Activated T-helper 2 cell treated with anti-CD3 and anti-CD28 coated beads, Interferon-gamma antibody, Interleukin-2, Interleukin-4, amounts not matched to agents 10 μg/mL and 5 μg/mL and 100 μg/mL, durations not matched to agents 14 hours and 24 hours and 36 hours (primary cell): ENCODE measurements at regions of chr14 and their contacts with region 1.

Region 1: DNA sequence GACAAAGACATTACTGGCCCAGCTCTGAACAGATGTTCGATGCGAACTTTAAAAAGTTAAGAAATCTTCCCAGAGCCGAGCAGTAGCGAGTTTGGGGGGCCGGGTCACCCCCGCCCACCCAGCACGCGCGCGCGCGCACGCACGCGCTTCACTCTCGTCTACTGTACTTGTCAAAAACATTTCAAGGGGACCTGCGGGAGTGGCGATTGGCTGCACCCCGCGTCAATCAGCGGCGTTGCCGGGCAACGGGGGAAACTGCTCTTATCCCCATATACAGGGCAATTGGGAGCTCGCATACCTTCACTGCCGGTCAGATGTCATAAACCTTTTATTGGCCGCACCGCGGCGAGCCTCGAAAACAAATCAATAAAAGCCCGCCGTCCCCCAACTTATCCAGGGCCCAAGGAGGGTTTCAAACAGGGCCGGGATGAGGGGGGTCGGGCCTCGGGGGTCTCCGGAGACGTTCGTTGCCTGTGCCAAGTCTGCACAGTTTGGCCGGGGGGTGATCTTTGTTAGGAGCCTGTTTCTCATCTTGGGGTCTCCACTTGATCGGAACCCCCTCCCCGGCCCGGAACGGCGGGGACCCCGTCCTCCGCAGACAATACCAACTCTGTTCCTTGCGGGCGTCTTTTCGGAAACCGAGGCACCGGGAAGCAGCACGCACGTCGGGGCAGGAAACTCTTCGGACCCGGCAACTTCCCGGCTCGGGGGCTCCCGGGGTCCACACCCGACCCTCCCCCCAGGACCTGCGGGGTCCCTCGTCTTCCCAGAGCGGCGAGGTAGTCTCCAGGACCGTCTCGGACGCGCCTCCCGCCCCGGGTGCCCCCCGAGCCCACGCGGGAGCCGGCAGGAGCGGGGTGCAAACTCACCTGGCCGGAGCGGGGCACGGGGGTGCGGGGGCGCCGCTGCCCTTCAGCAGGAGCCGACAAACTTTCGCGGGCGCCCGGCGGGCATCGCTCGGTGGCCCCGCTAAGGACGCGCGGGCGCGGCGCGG is 734 bp downstream of the FOXN3 start:
- DNase-seq: peak; percentile 99
- H3K4me3 Mint-ChIP-seq: peak overlapping the region; percentile 93
- H3K27ac Mint-ChIP-seq: peak overlapping the region; percentile 88
- H3K4me1 Mint-ChIP-seq: peaks cover 48% of the 10 kb centered on the region
- H3K27me3 Mint-ChIP-seq: no peaks in the 10 kb centered on the region

Region 2: GRCh38 chr14:89067293-89067972 is 348.9 kb before region 1 on chr14:
- intact Hi-C with region 1: loop called (anchors 10 kb)
- DNase-seq: peak; percentile 10
- H3K4me3 Mint-ChIP-seq: no peak overlapping the region
- H3K27ac Mint-ChIP-seq: peak overlapping the region; percentile 4
- H3K4me1 Mint-ChIP-seq: peaks cover 13% of the 10 kb centered on the region
- H3K27me3 Mint-ChIP-seq: peaks cover 52% of the 10 kb centered on the region

Region 3: DNA sequence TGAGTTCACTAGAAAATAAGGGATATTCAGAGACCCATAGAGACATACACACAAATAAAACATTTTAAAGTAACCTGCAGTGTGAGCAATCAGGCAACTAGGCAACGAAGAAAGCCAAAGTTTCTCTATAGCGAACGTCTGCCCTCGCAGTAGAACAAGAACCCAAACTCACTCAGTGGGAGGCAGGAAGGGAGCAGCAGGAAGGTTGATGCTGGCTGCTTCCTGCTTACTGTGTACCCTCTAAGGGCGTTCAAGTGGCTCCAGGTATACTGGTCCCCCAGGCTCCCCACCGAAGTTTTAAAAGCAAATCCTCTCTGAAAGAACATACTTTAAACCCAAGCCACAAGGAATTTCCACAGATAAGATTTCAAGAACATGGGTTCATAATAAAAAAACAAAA is 248.6 kb before region 1 on chr14:
- intact Hi-C with region 1: no loop called
- DNase-seq: no peak
- H3K4me3 Mint-ChIP-seq: no peak overlapping the region
- H3K27ac Mint-ChIP-seq: no peak overlapping the region
- H3K4me1 Mint-ChIP-seq: peaks cover 9% of the 10 kb centered on the region
- H3K27me3 Mint-ChIP-seq: no peaks in the 10 kb centered on the region

Region 4: GRCh38 chr14:89276424-89276975 is 139.8 kb before region 1 on chr14:
- intact Hi-C with region 1: loop called (anchors 2 kb)
- DNase-seq: peak; percentile 66
- H3K4me3 Mint-ChIP-seq: peak overlapping the region; percentile 77
- H3K27ac Mint-ChIP-seq: peak overlapping the region; percentile 99
- H3K4me1 Mint-ChIP-seq: peaks cover 83% of the 10 kb centered on the region
- H3K27me3 Mint-ChIP-seq: no peaks in the 10 kb centered on the region

Region 5: DNA sequence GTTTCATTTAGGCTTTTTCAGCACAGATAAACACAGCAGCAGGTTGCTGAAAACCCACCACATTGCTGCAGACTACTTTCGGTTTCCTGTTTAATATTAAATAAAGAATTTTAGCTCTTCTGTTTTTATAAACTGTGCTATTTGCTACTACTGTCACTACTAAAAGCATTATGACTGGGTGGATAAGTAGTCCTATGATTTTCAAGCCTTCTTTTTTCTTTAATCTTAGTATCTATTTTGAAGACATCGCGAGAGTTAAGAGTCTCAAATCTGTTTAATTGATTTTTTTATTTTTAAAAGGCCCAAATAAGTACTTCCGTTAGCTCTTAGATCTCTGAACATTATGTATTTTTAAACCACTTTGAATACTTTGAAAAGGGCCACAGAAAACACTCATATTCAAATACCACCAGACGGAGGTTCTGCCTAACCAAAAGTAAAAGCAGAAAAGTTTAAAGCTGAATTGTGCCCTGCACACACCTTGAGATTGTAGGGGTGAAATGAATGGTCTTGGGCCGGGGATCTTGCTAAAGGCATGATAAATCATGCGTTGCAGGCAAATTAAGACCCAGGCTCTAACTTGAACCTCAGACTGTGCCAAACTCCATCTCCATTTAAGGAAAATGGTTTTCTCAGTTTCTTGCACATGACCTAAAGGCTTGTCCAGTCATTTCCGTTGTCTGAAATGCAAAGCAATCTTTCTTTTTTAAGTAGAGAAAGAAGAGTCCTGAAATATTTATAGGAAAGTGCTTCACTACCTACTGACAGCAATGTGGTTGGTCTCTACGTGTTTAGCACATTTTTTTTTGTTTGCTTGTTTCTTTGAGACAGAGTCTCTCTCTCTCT is 14.3 kb after region 1 on chr14:
- intact Hi-C with region 1: loop called (anchors 1 kb)
- DNase-seq: peak; percentile 52
- H3K4me3 Mint-ChIP-seq: peak overlapping the region; percentile 84
- H3K27ac Mint-ChIP-seq: peak overlapping the region; percentile 94
- H3K4me1 Mint-ChIP-seq: peaks cover 59% of the 10 kb centered on the region
- H3K27me3 Mint-ChIP-seq: no peaks in the 10 kb centered on the region

Region 6: GRCh38 chr14:89773644-89774316 is 357.5 kb after region 1 on chr14:
- intact Hi-C with region 1: loop called (anchors 5 kb)
- DNase-seq: peak; percentile 39
- H3K4me3 Mint-ChIP-seq: peak overlapping the region; percentile 7
- H3K27ac Mint-ChIP-seq: no peak overlapping the region
- H3K4me1 Mint-ChIP-seq: peaks cover 23% of the 10 kb centered on the region
- H3K27me3 Mint-ChIP-seq: peaks cover 10% of the 10 kb centered on the region